Right lobe of liver (tissue), 6 donors: ENCODE measurements at regions of chr1 and their contacts with region 1.

Region 1: GRCh38 chr1:18299441-18300338 is 181.0 kb upstream of the KLHDC7A start:
- DNase-seq: no peak
- ATAC-seq: peak; percentile 64 to 75 (median 70)
- H3K4me3 ChIP-seq: no peak overlapping the region
- H3K27ac ChIP-seq: no peak overlapping the region
- H3K4me1 ChIP-seq: no peaks in the 10 kb centered on the region
- H3K27me3 ChIP-seq: no peaks in the 10 kb centered on the region
- CTCF ChIP-seq: peak; percentile 67 to 83 (median 76)
- POLR2A ChIP-seq: no peak

Region 2: DNA sequence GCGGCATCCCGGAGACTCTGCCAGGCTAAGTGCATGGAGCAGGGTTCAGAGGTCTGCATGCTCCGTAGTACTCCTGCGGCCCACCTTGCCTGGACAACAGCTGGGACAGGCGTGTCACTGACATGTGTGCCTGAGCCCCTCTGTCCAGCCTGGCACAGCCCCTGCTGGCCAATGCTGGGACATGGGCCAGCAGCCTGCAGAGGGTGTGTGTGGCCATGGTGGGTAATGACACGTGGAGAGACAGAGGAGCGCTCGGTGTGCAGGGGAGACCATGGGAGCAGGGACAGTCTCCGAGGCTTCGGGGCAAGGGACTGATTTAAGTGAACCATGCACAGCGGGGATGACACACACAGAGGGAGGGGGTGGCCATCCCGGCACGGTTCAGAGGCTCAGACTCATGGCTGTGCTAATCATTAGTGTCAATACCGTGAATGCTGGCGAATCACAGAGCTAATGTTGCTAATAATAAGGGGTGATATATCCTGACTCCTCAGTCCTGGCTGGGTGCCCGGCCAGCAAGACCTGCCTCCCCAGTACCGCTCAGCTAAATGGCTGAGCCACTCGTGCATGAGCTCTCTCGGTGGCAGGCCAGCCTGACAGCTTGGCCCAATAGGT is 150.6 kb before region 1 on chr1:
- intact Hi-C with region 1: no loop called
- DNase-seq: no peak
- ATAC-seq: no peak
- H3K4me3 ChIP-seq: no peak overlapping the region
- H3K27ac ChIP-seq: no peak overlapping the region
- H3K4me1 ChIP-seq: no peaks in the 10 kb centered on the region
- H3K27me3 ChIP-seq: no peaks in the 10 kb centered on the region
- CTCF ChIP-seq: no peak
- POLR2A ChIP-seq: no peak

Region 3: GRCh38 chr1:18569811-18570545 is 270.3 kb after region 1 on chr1:
- intact Hi-C with region 1: loop called in 1 of 2 experiments (anchors 5 kb)
- DNase-seq: no peak
- ATAC-seq: no peak
- H3K4me3 ChIP-seq: no peak overlapping the region
- H3K27ac ChIP-seq: no peak overlapping the region
- H3K4me1 ChIP-seq: no peaks in the 10 kb centered on the region
- H3K27me3 ChIP-seq: no peaks in the 10 kb centered on the region
- CTCF ChIP-seq: no peak
- POLR2A ChIP-seq: no peak